AG04450 (cell line): ENCODE measurements at regions of chr15 and their contacts with region 1.

Region 1: DNA sequence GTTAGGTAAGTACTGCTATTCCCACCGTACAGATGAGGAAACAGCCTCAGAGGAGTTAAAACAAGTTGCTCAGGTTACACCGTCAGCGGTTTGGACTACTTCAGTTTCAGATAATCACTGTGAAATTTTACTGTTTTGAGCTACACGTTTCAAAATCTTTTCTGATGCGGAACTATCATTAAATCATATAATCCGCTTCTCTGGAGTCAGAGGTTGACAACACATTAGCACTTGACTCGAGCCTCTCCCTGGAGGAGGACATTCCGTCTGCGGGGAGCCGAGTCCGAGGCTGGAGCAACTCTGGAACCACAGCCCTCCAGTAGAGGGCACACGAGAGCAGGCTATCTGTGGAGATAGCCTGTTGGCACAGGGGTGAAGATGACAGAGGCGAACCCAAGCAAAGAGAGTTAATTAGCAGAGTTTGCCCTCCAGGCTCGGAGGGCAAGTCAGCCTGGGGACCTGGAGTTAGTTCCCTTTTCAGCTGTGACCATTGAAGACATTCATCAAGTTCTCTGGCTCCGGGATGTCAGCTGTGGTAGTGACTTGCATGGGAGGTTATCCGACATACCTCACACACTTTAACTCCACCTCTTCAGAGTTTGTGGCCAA is 131.2 kb downstream of the IGF1R start:
- DNase-seq: no peak
- H3K4me3 ChIP-seq: no peak overlapping the region
- H3K27ac ChIP-seq: no peak overlapping the region
- H3K27me3 ChIP-seq: no peaks in the 10 kb centered on the region
- CTCF ChIP-seq: peak; percentile 90

Region 2: GRCh38 chr15:98658831-98659699 is 120.5 kb before region 1 on chr15:
- CTCF ChIA-PET with region 1: interaction called, 13 read pairs
- POLR2A ChIA-PET with region 1: no interaction called
- DNase-seq: no peak
- H3K4me3 ChIP-seq: no peak overlapping the region
- H3K27ac ChIP-seq: no peak overlapping the region
- H3K27me3 ChIP-seq: no peaks in the 10 kb centered on the region
- CTCF ChIP-seq: peak; percentile 93

Region 3: DNA sequence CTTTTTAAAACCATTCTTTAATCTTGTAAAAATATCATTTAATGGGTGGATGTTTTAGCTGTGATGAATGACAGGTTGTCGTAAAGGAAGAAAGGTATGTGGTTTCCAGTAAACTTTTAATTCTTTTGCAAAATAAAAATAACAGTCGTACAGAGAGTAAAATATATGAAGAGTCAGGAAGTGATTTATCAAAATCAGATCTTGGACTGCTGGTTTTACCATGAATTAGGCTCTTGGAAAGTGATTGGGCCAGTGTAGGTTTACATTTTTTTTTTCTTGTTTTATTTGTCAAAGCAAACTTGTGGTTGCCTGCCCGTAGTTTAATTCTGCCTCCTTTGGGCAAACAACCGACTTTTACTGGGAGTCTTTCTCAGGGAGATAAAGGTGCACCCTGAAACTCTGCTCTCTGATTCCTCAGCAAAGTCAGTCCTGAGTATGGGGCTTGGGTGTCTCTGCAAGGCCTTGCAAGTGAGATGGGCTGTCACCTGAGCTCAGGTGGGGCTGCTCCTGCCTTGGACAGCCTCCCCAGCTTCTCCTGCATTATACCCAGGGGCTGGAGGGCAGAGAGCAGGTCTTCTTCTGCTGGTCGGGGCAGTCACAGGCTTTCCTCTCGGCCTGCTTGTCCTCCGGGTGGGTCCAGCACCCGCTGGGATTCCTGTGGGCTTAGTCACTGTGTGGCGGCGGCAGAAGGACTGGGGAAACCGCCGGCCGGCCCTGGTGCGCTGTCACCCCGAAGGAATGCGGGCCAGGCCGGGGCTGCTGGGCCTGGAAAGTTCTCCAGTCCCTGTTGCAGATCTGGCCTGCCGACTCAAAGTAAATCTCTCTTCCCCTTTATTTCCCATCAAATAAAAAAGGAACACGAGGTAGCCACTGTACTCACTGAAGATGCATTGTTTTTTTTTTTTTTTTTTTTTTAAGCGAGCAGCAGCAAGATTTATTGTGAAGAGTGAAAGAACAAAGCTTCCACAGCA is 52.2 kb before region 1 on chr15:
- CTCF ChIA-PET with region 1: interaction called, 18 read pairs
- POLR2A ChIA-PET with region 1: no interaction called
- DNase-seq: peak; percentile 79
- H3K4me3 ChIP-seq: peak overlapping the region; percentile 37
- H3K27ac ChIP-seq: peak overlapping the region; percentile 95
- H3K27me3 ChIP-seq: no peaks in the 10 kb centered on the region
- CTCF ChIP-seq: no peak

Region 4: GRCh38 chr15:98753726-98754671 is 25.6 kb before region 1 on chr15:
- CTCF ChIA-PET with region 1: interaction called, 10 read pairs
- POLR2A ChIA-PET with region 1: no interaction called
- DNase-seq: no peak
- H3K4me3 ChIP-seq: no peak overlapping the region
- H3K27ac ChIP-seq: no peak overlapping the region
- H3K27me3 ChIP-seq: no peaks in the 10 kb centered on the region
- CTCF ChIP-seq: no peak

Region 5: GRCh38 chr15:98800437-98801233 is 21.1 kb after region 1 on chr15:
- CTCF ChIA-PET with region 1: interaction called, 14 read pairs
- POLR2A ChIA-PET with region 1: no interaction called
- DNase-seq: peak; percentile 66
- H3K4me3 ChIP-seq: peak overlapping the region; percentile 37
- H3K27ac ChIP-seq: peak overlapping the region; percentile 73
- H3K27me3 ChIP-seq: no peaks in the 10 kb centered on the region
- CTCF ChIP-seq: no peak

Region 6: GRCh38 chr15:98807262-98807661 is 27.7 kb after region 1 on chr15:
- CTCF ChIA-PET with region 1: interaction called, 17 read pairs
- POLR2A ChIA-PET with region 1: no interaction called
- DNase-seq: peak; percentile 67
- H3K4me3 ChIP-seq: no peak overlapping the region
- H3K27ac ChIP-seq: no peak overlapping the region
- H3K27me3 ChIP-seq: no peaks in the 10 kb centered on the region
- CTCF ChIP-seq: no peak